ENCODE measurements at regions of chr12 and their contacts with region 1.

Region 1: DNA sequence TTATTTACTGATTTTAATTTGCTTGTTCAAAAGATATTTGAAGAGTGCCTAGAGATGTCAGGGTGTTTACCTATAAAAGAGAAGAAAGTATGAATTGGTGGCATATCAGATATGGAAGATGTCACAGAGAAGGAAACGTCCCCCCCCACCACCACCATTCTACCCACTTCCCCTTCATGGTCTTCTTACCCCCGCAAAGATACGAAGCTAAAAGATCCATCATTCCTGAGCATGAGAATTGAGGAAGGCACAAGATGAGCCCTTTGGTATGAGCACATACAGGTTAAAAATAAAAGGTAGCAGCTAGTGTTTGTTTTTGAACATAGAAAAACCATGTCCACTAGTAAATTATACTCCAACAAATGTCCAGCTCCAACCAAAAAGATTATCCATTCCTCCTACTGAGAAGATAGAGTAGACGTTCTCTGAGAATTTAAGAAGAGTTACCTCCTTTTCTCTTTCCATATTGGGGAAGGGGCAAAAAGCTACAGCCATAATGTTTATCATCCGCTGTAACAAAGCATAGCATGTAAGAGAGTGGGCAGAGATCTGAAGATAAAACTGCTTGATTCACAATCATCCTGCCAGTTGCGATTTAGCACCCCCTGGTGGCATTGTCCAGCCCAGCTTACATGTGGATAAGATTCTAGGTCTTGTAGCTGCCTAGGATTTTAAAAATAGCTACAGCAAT is 29.1 kb downstream of the NFYB start:
- DNase-seq: peak; percentile 88
- ATAC-seq: peak; percentile 91
- H3K4me3 Mint-ChIP-seq: no peak overlapping the region
- H3K27ac Mint-ChIP-seq: no peak overlapping the region
- H3K4me1 Mint-ChIP-seq: peaks cover 21% of the 10 kb centered on the region
- H3K27me3 Mint-ChIP-seq: no peaks in the 10 kb centered on the region
- CTCF ChIP-seq: peak; percentile 65

Region 2: GRCh38 chr12:104049903-104050356 is 59.0 kb before region 1 on chr12 and contains the start of gene GLT8D2:
- CTCF ChIA-PET with region 1: interaction called, 16 read pairs
- POLR2A ChIA-PET with region 1: no interaction called
- DNase-seq: peak; percentile 70
- ATAC-seq: peak; percentile 84
- H3K4me3 Mint-ChIP-seq: peak within 1 kb of the TSS; percentile 82
- H3K27ac Mint-ChIP-seq: peak within 1 kb of the TSS; percentile 80
- H3K4me1 Mint-ChIP-seq: peaks cover 18% of the 10 kb centered on the region
- H3K27me3 Mint-ChIP-seq: peaks cover 17% of the 10 kb centered on the region
- CTCF ChIP-seq: no peak
- total RNA-seq, gene GLT8D2: 4.5 to 10.2 TPM (median 8.8 TPM) in 3 replicates

Region 3: GRCh38 chr12:104057771-104058197 is 51.1 kb before region 1 on chr12:
- CTCF ChIA-PET with region 1: interaction called, 73 read pairs
- POLR2A ChIA-PET with region 1: no interaction called
- DNase-seq: no peak
- ATAC-seq: peak; percentile 78
- H3K4me3 Mint-ChIP-seq: no peak overlapping the region
- H3K27ac Mint-ChIP-seq: no peak overlapping the region
- H3K4me1 Mint-ChIP-seq: peaks cover 22% of the 10 kb centered on the region
- H3K27me3 Mint-ChIP-seq: peaks cover 12% of the 10 kb centered on the region
- CTCF ChIP-seq: peak; percentile 19; the same call in 1 of the 2 replicates

Region 4: GRCh38 chr12:104064031-104064822 is 44.7 kb before region 1 on chr12 and contains the start of gene HCFC2:
- CTCF ChIA-PET with region 1: interaction called, 73 read pairs
- POLR2A ChIA-PET with region 1: interaction called, 4 read pairs
- DNase-seq: peak; percentile 83
- ATAC-seq: peak; percentile 88
- H3K4me3 Mint-ChIP-seq: peak within 1 kb of the TSS; percentile 89
- H3K27ac Mint-ChIP-seq: no peak within 1 kb of the TSS; the same call in 1 of the 2 replicates
- H3K4me1 Mint-ChIP-seq: peaks cover 8% of the 10 kb centered on the region; the same call in 1 of the 2 replicates
- H3K27me3 Mint-ChIP-seq: peaks cover 31% of the 10 kb centered on the region
- CTCF ChIP-seq: no peak
- total RNA-seq, gene HCFC2: 1.6 to 2.1 TPM (median 1.6 TPM) in 3 replicates

Region 5: GRCh38 chr12:104097954-104098353 is 10.9 kb before region 1 on chr12:
- CTCF ChIA-PET with region 1: interaction called, 17 read pairs
- POLR2A ChIA-PET with region 1: no interaction called
- DNase-seq: no peak
- ATAC-seq: no peak
- H3K4me3 Mint-ChIP-seq: no peak overlapping the region
- H3K27ac Mint-ChIP-seq: no peak overlapping the region
- H3K4me1 Mint-ChIP-seq: no peaks in the 10 kb centered on the region
- H3K27me3 Mint-ChIP-seq: no peaks in the 10 kb centered on the region
- CTCF ChIP-seq: no peak

Region 6: DNA sequence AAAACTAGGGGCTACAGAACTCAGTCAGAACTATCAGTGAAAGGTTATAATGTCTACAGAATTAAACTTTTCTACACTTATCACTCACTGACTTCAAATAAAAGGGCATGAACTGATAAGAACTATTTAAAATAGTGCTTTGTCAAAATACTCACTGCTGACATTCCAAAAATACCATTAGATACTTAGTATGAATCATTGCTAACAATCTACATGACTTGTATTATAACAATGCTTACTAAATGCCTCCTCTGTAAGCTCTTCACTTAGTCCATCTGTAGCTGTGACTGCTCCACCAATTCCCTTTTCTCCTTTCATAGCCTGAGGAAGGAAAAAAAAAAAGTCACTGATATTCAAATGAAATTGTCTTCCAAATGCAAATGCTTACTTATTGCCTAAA is 12.1 kb after region 1 on chr12:
- CTCF ChIA-PET with region 1: interaction called, 21 read pairs
- POLR2A ChIA-PET with region 1: no interaction called
- DNase-seq: no peak
- ATAC-seq: 0 out of 2 replicates have a peak, but pooled peaks have one; percentile 41
- H3K4me3 Mint-ChIP-seq: no peak overlapping the region
- H3K27ac Mint-ChIP-seq: peak overlapping the region; percentile 64; the same call in 1 of the 2 replicates
- H3K4me1 Mint-ChIP-seq: peaks cover 13% of the 10 kb centered on the region
- H3K27me3 Mint-ChIP-seq: no peaks in the 10 kb centered on the region
- CTCF ChIP-seq: no peak

Region 7: GRCh38 chr12:104137913-104138796 is 29.3 kb after region 1 on chr12 and contains the start of gene NFYB:
- CTCF ChIA-PET with region 1: interaction called, 11 read pairs
- POLR2A ChIA-PET with region 1: no interaction called
- DNase-seq: peak; percentile 88
- ATAC-seq: peak; percentile 93
- H3K4me3 Mint-ChIP-seq: peak within 1 kb of the TSS; percentile 84
- H3K27ac Mint-ChIP-seq: peak within 1 kb of the TSS; percentile 82
- H3K4me1 Mint-ChIP-seq: peaks cover 20% of the 10 kb centered on the region
- H3K27me3 Mint-ChIP-seq: peaks cover 29% of the 10 kb centered on the region
- CTCF ChIP-seq: no peak
- total RNA-seq, gene NFYB: 33.0 to 36.0 TPM (median 34.6 TPM) in 3 replicates

Measured in WTC11 (cell line).